Caco-2 (cell line): ENCODE measurements at regions of chr2 and their contacts with region 1.

Region 1: DNA sequence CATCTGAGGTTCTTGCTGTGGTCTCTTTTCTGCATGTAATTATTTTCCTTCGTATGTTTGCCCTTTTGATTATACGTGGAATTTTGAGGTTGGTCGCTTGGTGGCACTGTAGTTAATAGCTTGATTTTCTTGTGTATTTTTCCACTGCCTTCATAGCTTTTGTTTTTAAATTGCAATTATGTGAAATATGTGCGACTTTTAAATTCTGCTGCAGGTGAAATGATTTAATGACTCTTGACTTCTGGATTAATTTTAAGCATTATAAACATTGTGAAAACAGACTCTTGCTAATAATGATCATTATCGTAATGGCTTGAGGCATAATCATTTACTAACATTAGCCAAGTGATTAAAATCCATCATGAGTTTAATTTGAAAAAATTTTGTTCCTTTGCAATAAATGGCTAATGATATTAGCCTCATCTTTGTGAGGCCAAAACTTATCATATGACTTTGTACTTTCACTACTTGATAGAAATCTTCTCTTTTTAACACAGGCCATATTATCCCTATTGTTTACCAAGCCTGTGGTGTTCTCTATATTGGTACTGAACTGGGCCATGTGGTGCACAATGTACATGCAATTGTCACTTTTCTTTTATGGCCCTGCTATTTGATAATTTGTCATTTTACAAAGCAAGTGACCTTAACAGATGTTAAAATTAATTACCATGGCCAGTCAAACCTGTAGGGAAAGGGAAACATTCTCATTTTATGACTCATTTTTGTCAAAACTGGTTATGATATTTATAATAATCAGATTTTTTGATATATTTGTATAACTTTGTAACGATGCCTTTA is 62.8 kb upstream of the NEUROD1 start:
- DNase-seq: peak in 1 of 2 experiments; percentile 46
- H3K4me3 ChIP-seq: no peak overlapping the region
- H3K4me3 Mint-ChIP-seq: no peak overlapping the region
- H3K27ac Mint-ChIP-seq: no peak overlapping the region
- H3K4me1 ChIP-seq: no peaks in the 10 kb centered on the region
- H3K4me1 Mint-ChIP-seq: no peaks in the 10 kb centered on the region
- H3K27me3 ChIP-seq: no peaks in the 10 kb centered on the region
- H3K27me3 Mint-ChIP-seq: no peaks in the 10 kb centered on the region
- CTCF ChIP-seq: peak; percentile 57 to 63

Region 2: GRCh38 chr2:181430406-181431118 is 312.6 kb before region 1 on chr2:
- CTCF ChIA-PET with region 1: no interaction called
- POLR2A ChIA-PET with region 1: no interaction called
- intact Hi-C with region 1: no loop called
- DNase-seq: no peak
- H3K4me3 ChIP-seq: no peak overlapping the region
- H3K4me3 Mint-ChIP-seq: no peak overlapping the region
- H3K27ac Mint-ChIP-seq: no peak overlapping the region
- H3K4me1 ChIP-seq: no peaks in the 10 kb centered on the region
- H3K4me1 Mint-ChIP-seq: no peaks in the 10 kb centered on the region
- H3K27me3 ChIP-seq: no peaks in the 10 kb centered on the region
- H3K27me3 Mint-ChIP-seq: no peaks in the 10 kb centered on the region
- CTCF ChIP-seq: peak in 1 of 2 experiments; percentile 15

Region 3: GRCh38 chr2:181904022-181904632 is 161.0 kb after region 1 on chr2:
- CTCF ChIA-PET with region 1: interaction called, 7 read pairs
- POLR2A ChIA-PET with region 1: interaction called, 3 read pairs
- intact Hi-C with region 1: loop called (anchors 1 kb)
- DNase-seq: peak in 1 of 2 experiments; percentile 52
- H3K4me3 ChIP-seq: no peak overlapping the region
- H3K4me3 Mint-ChIP-seq: no peak overlapping the region
- H3K27ac Mint-ChIP-seq: no peak overlapping the region
- H3K4me1 ChIP-seq: no peaks in the 10 kb centered on the region
- H3K4me1 Mint-ChIP-seq: no peaks in the 10 kb centered on the region
- H3K27me3 ChIP-seq: no peaks in the 10 kb centered on the region
- H3K27me3 Mint-ChIP-seq: no peaks in the 10 kb centered on the region
- CTCF ChIP-seq: peak; percentile 58 to 66